ENCODE measurements at regions of chr15 and their contacts with region 1.

Region 1: DNA sequence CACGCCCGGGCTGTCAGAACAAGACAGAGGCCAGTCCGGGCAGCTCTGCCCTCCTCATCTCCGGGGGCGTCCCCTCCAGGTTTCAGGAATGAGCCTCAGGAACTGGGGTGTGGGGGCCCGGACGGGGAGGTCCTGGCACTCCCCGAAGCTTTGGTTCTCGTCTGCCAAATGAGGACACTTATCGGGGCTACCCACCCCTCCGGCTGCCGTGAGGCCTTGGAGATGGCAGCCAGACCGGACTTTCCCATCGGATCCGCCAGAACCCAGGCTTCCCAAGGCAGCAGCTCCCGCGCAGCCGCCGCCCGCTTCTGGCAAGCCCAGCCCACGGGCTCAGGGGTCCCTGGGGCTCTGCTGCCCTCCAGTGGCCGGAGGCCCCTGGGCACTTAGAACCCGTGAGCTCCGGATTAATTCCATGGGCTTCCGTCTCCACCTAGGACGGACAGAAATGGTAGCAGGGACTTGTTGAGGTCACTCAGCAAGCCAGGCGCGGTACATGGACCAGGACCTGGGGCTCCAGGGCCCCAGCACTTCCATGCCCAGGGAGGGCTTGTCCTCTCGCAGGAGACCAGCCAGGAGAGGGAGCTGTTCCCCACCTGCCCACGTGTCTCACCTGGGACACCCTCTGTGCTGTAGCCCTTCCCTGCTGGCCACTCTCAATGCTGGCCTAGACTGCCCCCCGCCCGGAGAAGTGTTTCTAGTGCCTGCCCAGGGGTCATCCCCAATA is 89.4 kb downstream of the LINGO1 start:
- DNase-seq: peak; percentile 90
- CTCF ChIP-seq: peak; percentile 92

Region 2: DNA sequence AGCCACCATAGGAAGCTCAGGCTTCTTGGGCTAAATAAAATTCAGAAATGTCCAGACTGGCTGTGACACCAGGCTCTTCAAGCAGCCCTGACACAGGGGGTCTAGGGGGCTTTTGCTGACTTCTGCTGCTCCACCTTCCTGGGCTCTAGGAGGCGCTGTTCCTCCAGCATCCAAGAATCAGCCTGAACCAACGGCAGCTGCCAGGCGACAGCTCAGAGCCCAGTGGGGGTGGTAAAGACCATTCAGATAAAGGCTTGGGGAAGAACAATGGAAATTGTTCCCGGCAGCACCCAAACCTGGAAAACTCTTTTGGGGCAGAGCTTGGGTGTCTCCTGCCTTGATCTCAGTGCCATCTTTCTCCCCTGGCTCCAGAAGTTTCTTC is 570.0 kb before region 1 on chr15:
- CTCF ChIA-PET with region 1: interaction called, 14 read pairs
- POLR2A ChIA-PET with region 1: interaction called, 8 read pairs
- DNase-seq: peak; percentile 66
- CTCF ChIP-seq: peak; percentile 65

Region 3: DNA sequence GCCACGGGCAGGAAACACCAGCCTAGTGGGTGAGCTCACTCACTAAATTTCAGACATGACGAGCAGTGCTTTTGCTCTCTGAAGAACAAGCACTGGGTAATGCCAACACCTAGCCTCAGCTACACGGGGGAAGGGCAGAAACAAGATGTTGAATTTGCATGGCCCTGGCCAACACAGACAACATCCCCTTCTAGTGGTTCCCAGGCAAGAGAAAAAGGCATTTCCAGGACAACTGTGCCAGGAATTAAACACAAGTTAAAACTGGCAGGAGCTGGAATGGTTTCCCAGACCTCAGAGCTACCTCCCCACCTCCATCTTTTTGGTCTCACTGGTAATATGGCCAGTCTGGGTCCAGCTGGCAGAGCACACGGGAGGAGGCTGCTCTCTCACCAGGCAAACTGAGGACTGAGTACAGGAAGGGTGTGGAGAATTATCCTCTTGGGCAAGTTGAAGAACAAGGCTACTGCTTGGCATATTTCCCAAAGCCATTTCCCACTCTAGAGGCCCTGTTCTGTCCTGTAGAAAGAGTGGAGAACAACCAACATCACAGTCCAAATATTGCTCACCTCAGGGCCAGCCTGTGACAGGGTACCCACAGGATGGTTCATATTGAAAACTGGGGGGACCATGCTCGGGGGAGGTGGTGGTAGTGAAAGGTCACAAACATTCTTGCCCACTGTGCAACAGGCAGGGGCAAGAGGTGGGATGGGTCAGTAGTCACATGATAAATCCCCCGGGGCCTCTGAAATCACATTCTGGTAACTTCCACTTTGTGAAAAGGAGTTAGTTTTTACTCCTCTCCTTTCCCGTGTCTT is 498.9 kb before region 1 on chr15:
- CTCF ChIA-PET with region 1: interaction called, 11 read pairs
- POLR2A ChIA-PET with region 1: no interaction called
- DNase-seq: no peak
- CTCF ChIP-seq: no peak

Region 4: GRCh38 chr15:77107531-77108355 is 435.6 kb before region 1 on chr15:
- CTCF ChIA-PET with region 1: interaction called, 143 read pairs
- POLR2A ChIA-PET with region 1: no interaction called
- DNase-seq: peak; percentile 66
- CTCF ChIP-seq: peak; percentile 68

Region 5: DNA sequence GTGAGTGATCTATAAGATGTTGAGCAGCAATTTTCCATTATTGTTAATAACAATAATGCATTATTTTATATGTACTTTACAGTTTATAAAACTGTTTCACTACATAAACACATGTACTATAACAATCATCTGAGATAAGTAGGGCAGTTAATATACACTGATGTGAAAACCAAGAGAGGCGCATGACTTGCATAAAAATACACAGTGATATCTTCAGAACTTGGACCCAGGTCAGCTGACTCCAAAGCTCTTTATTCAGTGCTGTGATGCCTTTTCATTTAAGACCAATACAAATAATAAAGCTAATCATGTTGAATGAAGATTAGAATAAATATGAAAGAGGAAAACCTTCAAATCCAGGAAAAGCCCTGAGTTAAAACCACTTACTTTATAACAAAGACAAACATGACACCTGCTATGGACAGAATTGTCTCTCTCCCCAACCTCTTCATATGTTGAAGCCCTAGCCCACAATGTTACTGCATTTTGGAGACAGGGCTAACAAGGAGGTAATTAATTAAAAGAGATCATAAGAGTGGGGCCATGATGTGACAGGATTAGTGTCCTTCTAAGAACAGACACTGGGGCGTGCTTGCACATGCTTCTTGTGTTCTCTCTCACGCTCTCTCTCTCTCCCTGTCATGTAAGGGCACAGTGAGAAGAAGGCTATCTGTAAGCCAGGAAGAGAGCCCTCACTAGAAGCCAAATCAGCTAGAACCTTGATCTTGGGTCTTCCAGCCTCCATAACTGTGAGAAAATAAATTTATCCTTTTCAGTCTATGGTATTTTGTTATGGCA is 416.6 kb before region 1 on chr15:
- CTCF ChIA-PET with region 1: interaction called, 102 read pairs
- POLR2A ChIA-PET with region 1: no interaction called
- DNase-seq: no peak
- CTCF ChIP-seq: no peak

Region 6: GRCh38 chr15:77186594-77187011 is 356.7 kb before region 1 on chr15:
- CTCF ChIA-PET with region 1: interaction called, 268 read pairs
- POLR2A ChIA-PET with region 1: no interaction called
- DNase-seq: peak; percentile 25
- CTCF ChIP-seq: peak; percentile 69

Region 7: GRCh38 chr15:77507911-77508310 is 35.4 kb before region 1 on chr15:
- CTCF ChIA-PET with region 1: interaction called, 38 read pairs
- POLR2A ChIA-PET with region 1: no interaction called
- DNase-seq: no peak
- CTCF ChIP-seq: no peak

Measured in GM10248 (cell line).